Posterior vena cava (tissue), 2 donors: ENCODE measurements at regions of chr1 and their contacts with region 1.

Region 1: GRCh38 chr1:168252204-168252733 is 26.5 kb downstream of the SFT2D2 start:
- DNase-seq: no peak

Region 2: DNA sequence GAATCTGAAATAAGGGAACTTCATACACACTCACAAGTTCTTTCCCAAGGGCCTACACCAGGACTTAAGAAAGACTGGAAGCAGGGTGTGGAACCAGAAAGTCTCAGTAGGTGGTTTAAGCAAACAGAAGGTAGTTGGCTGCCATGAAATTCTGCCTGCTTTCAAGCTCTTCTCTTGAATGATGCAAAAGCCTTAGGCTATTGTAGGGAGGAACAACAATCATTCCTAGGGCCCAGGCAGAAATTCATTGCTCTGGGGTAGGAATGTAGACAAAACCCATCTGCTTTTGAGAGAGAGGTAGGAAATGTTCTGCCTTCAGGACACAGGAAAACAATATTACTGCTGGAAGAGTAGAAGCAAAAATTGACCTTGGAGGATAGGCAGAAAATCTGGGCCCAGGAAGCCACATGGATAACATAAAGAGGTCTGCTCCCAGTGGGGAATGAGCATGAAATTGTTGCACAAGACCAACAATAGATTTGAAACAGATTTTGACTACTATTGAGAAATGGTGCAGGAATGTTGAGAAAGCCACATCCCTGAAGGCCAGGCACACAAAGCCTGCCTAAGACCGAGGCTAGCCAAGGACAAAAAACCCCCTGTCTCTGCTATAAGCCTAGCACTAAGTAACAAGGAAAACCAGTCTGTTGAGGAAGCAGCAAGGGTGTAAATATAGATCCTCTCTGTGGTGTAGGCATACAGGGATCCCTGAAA is 49.2 kb before region 1 on chr1:
- intact Hi-C with region 1: loop called in 1 of 2 experiments (anchors 1 kb)
- DNase-seq: no peak